Natural killer cell (primary cell): ENCODE measurements at regions of chr14 and their contacts with region 1.

Region 1: GRCh38 chr14:92551044-92551841 is 37.7 kb downstream of the RIN3 start:
- DNase-seq: peak in 1 of 2 donors; percentile 72
- ATAC-seq: peak; percentile 39 to 72 (median 67)
- H3K4me3 ChIP-seq: no peak overlapping the region
- H3K4me3 Mint-ChIP-seq: peak overlapping the region; percentile 81
- H3K27ac ChIP-seq: no peak overlapping the region
- H3K27ac Mint-ChIP-seq: peak overlapping the region; percentile 82 to 84
- H3K4me1 ChIP-seq: peaks cover 74% of the 10 kb centered on the region
- H3K4me1 Mint-ChIP-seq: peaks cover 62 to 79% of the 10 kb centered on the region in 2 donors
- H3K27me3 ChIP-seq: no peaks in the 10 kb centered on the region
- H3K27me3 Mint-ChIP-seq: no peaks in the 10 kb centered on the region
- CTCF ChIP-seq: peak; percentile 43

Region 2: GRCh38 chr14:92460916-92461579 is 90.2 kb before region 1 on chr14:
- intact Hi-C with region 1: loop called (anchors 2 kb)
- DNase-seq: peak in 1 of 2 donors; percentile 63
- ATAC-seq: peak; percentile 86 to 90 (median 89)
- H3K4me3 ChIP-seq: no peak overlapping the region
- H3K4me3 Mint-ChIP-seq: peak overlapping the region; percentile 41
- H3K27ac ChIP-seq: peak overlapping the region; percentile 70
- H3K27ac Mint-ChIP-seq: peak overlapping the region; percentile 85 to 91
- H3K4me1 ChIP-seq: peaks cover 43% of the 10 kb centered on the region
- H3K4me1 Mint-ChIP-seq: peaks cover 21 to 47% of the 10 kb centered on the region in 2 donors
- H3K27me3 ChIP-seq: no peaks in the 10 kb centered on the region
- H3K27me3 Mint-ChIP-seq: no peaks in the 10 kb centered on the region
- CTCF ChIP-seq: no peak

Region 3: DNA sequence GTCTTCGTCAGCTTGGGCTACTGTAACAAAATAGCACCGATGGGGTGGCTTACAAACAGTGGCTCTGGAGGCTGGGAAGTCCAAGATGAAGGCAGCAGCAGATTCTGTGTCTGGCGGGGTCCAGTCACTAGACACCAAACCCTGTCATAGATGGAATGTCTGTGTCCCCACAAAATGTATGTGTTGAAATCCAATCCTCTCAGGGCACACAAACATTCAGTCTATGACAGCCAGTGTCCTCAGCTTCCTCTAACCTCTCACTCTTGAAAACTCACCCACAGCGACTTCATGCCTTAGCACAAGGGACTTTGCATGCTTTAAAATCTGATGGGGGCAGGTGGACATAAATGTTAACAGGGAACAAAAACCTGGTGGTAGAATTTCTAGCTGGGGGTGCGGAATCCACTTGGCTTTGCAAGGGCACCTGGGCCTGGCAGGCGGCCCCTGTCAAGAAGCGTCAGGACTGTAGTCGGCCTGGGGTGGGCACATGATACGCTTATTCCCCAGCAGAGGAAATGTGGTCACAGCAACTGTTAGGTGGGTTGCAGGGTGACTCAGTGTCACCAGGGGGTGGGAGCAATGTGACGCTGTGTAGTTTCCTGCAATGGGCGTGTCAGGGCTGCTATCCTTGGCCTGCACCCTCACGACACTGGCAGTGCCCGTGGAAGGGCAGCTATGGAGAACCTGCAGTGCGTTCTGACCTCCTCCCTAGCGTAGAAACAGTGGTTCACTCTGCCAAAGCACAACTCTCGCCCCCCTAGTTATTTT is 20.0 kb before region 1 on chr14:
- intact Hi-C with region 1: loop called (anchors 2 kb)
- DNase-seq: peak; percentile 86 to 91
- ATAC-seq: peak; percentile 76 to 93 (median 93)
- H3K4me3 ChIP-seq: no peak overlapping the region
- H3K4me3 Mint-ChIP-seq: peak overlapping the region; percentile 89
- H3K27ac ChIP-seq: peak overlapping the region; percentile 98
- H3K27ac Mint-ChIP-seq: peak overlapping the region; percentile 98 to 99
- H3K4me1 ChIP-seq: peaks cover 87% of the 10 kb centered on the region
- H3K4me1 Mint-ChIP-seq: peaks cover 75 to 92% of the 10 kb centered on the region in 2 donors
- H3K27me3 ChIP-seq: no peaks in the 10 kb centered on the region
- H3K27me3 Mint-ChIP-seq: no peaks in the 10 kb centered on the region
- CTCF ChIP-seq: no peak

Region 4: GRCh38 chr14:92585981-92586937 is 35.0 kb after region 1 on chr14:
- intact Hi-C with region 1: loop called (anchors 1 kb)
- DNase-seq: peak; percentile 45 to 83
- ATAC-seq: peak; percentile 50 to 73 (median 68)
- H3K4me3 ChIP-seq: no peak overlapping the region
- H3K4me3 Mint-ChIP-seq: peak overlapping the region; percentile 84
- H3K27ac ChIP-seq: peak overlapping the region; percentile 83
- H3K27ac Mint-ChIP-seq: peak overlapping the region; percentile 94 to 96
- H3K4me1 ChIP-seq: peaks cover 87% of the 10 kb centered on the region
- H3K4me1 Mint-ChIP-seq: peaks cover 91 to 97% of the 10 kb centered on the region in 2 donors
- H3K27me3 ChIP-seq: no peaks in the 10 kb centered on the region
- H3K27me3 Mint-ChIP-seq: no peaks in the 10 kb centered on the region
- CTCF ChIP-seq: no peak

Region 5: DNA sequence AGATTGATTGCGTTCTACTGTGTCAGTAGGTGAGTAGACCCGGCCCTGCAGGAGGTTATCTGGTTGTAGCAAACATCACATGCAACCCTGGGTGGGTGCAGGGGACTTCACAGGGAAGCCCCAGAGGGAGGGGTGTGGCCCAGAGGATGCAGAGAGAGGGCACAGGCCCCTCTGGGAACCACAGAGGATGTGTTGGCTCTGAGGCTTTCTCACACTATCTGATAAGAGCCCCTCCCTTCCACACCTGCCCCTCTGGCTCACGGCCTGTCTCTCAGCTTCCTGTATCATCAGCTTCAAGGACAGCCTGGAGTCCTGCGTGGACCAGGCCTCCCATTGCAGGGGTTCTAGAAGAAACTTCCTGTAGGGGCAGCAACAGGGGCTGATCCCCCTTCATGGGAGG is 64.2 kb after region 1 on chr14:
- intact Hi-C with region 1: loop called (anchors 2 kb)
- DNase-seq: peak; percentile 75 to 93
- ATAC-seq: peak; percentile 85 to 97 (median 93)
- H3K4me3 ChIP-seq: no peak overlapping the region
- H3K4me3 Mint-ChIP-seq: peak overlapping the region; percentile 87
- H3K27ac ChIP-seq: peak overlapping the region; percentile 99
- H3K27ac Mint-ChIP-seq: peak overlapping the region; percentile 97 to 100
- H3K4me1 ChIP-seq: peaks cover 63% of the 10 kb centered on the region
- H3K4me1 Mint-ChIP-seq: peaks cover 67 to 72% of the 10 kb centered on the region in 2 donors
- H3K27me3 ChIP-seq: no peaks in the 10 kb centered on the region
- H3K27me3 Mint-ChIP-seq: no peaks in the 10 kb centered on the region
- CTCF ChIP-seq: no peak

Region 6: GRCh38 chr14:92644970-92645515 is 93.8 kb after region 1 on chr14:
- intact Hi-C with region 1: no loop called
- DNase-seq: no peak
- ATAC-seq: no peak
- H3K4me3 ChIP-seq: no peak overlapping the region
- H3K4me3 Mint-ChIP-seq: no peak overlapping the region
- H3K27ac ChIP-seq: no peak overlapping the region
- H3K27ac Mint-ChIP-seq: peak overlapping the region in 1 of 2 donors; percentile 96
- H3K4me1 ChIP-seq: peaks cover 44% of the 10 kb centered on the region
- H3K4me1 Mint-ChIP-seq: peaks cover 25 to 47% of the 10 kb centered on the region in 2 donors
- H3K27me3 ChIP-seq: no peaks in the 10 kb centered on the region
- H3K27me3 Mint-ChIP-seq: no peaks in the 10 kb centered on the region
- CTCF ChIP-seq: no peak

Region 7: GRCh38 chr14:92680781-92681650 is 129.8 kb after region 1 on chr14:
- intact Hi-C with region 1: loop called (anchors 2 kb)
- DNase-seq: peak; percentile 74 to 89
- ATAC-seq: peak; percentile 85 to 87 (median 87)
- H3K4me3 ChIP-seq: no peak overlapping the region
- H3K4me3 Mint-ChIP-seq: peak overlapping the region; percentile 42
- H3K27ac ChIP-seq: peak overlapping the region; percentile 69
- H3K27ac Mint-ChIP-seq: peak overlapping the region; percentile 91
- H3K4me1 ChIP-seq: peaks cover 43% of the 10 kb centered on the region
- H3K4me1 Mint-ChIP-seq: peaks cover 34 to 51% of the 10 kb centered on the region in 2 donors
- H3K27me3 ChIP-seq: no peaks in the 10 kb centered on the region
- H3K27me3 Mint-ChIP-seq: no peaks in the 10 kb centered on the region
- CTCF ChIP-seq: peak; percentile 87

Region 8: DNA sequence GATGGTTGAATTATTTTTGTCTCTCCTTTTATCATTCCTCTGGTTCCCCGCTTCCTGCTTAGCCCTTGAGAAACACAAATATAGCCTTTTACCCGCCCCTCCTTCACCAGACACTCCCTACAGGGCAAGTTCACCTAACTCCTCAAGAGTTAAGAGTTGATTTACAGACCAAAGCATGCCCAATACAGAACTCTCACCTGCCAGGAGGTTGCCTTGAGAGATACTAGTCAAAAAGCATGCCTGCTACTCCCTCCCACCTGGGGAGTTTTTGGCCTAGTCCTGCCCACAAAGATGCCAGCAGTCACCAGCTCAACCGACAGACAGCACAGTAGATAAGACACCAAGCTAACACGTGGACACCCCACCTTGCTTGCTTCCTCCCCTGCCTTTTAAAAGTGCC is 186.0 kb after region 1 on chr14:
- intact Hi-C with region 1: no loop called
- DNase-seq: peak in 1 of 2 donors; percentile 52
- ATAC-seq: peak in 2 of 3 donors; percentile 44 to 54
- H3K4me3 ChIP-seq: no peak overlapping the region
- H3K4me3 Mint-ChIP-seq: no peak overlapping the region
- H3K27ac ChIP-seq: no peak overlapping the region
- H3K27ac Mint-ChIP-seq: no peak overlapping the region
- H3K4me1 ChIP-seq: peaks cover 3% of the 10 kb centered on the region
- H3K4me1 Mint-ChIP-seq: peaks cover 0 to 12% of the 10 kb centered on the region in 2 donors
- H3K27me3 ChIP-seq: no peaks in the 10 kb centered on the region
- H3K27me3 Mint-ChIP-seq: peaks cover 35 to 38% of the 10 kb centered on the region in 2 donors
- CTCF ChIP-seq: no peak